Activated CD4-positive, alpha-beta memory T cell treated with anti-CD3 and anti-CD28 coated beads for 36 hours (primary cell): ENCODE measurements at regions of chr18 and their contacts with region 1.

Region 1: GRCh38 chr18:58043491-58044379 is at the start of gene NEDD4L:
- DNase-seq: peak; percentile 89
- H3K4me3 Mint-ChIP-seq: peak within 1 kb of the TSS; percentile 86
- H3K27ac Mint-ChIP-seq: peak within 1 kb of the TSS; percentile 26
- H3K4me1 Mint-ChIP-seq: peaks cover 20% of the 10 kb centered on the region
- H3K27me3 Mint-ChIP-seq: peaks cover 25% of the 10 kb centered on the region
- total RNA-seq, gene NEDD4L: 3.4 to 3.8 TPM

Region 2: GRCh38 chr18:58117786-58118403 is 74.2 kb after region 1 on chr18:
- CTCF ChIA-PET with region 1: interaction called, 30 read pairs
- POLR2A ChIA-PET with region 1: interaction called, 4 read pairs
- intact Hi-C with region 1: loop called (anchors 1 kb)
- DNase-seq: no peak
- H3K4me3 Mint-ChIP-seq: no peak overlapping the region
- H3K27ac Mint-ChIP-seq: no peak overlapping the region
- H3K4me1 Mint-ChIP-seq: peaks cover 3% of the 10 kb centered on the region
- H3K27me3 Mint-ChIP-seq: no peaks in the 10 kb centered on the region